ENCODE measurements at regions of chr1 and their contacts with region 1.

Region 1: GRCh38 chr1:21255278-21255942 is 34.9 kb downstream of the ECE1 start:
- DNase-seq: peak; percentile 87 to 93 (median 90)
- ATAC-seq: peak; percentile 73 to 90 (median 84)
- H3K4me3 ChIP-seq: no peak overlapping the region
- H3K27ac ChIP-seq: peak overlapping the region in 8 of 12 donors; percentile 31 to 59 (median 43)
- H3K4me1 ChIP-seq: peaks cover 0 to 39% (median 21%) of the 10 kb centered on the region in 12 donors
- H3K27me3 ChIP-seq: no peaks in the 10 kb centered on the region
- CTCF ChIP-seq: peak; percentile 79 to 93 (median 88)
- POLR2A ChIP-seq: no peak

Region 2: GRCh38 chr1:21232044-21232443 is 23.4 kb before region 1 on chr1:
- intact Hi-C with region 1: loop called in 1 of 10 experiments (anchors 2 kb)
- DNase-seq: peak in 2 of 5 donors; percentile 45 to 56
- ATAC-seq: peak; percentile 19 to 75 (median 70)
- H3K4me3 ChIP-seq: no peak overlapping the region
- H3K27ac ChIP-seq: no peak overlapping the region
- H3K4me1 ChIP-seq: peaks cover 0 to 16% (median 1%) of the 10 kb centered on the region in 12 donors
- H3K27me3 ChIP-seq: no peaks in the 10 kb centered on the region
- CTCF ChIP-seq: peak; percentile 72 to 92 (median 82)
- POLR2A ChIP-seq: no peak

Region 3: GRCh38 chr1:21344750-21345443 is 89.5 kb after region 1 on chr1:
- intact Hi-C with region 1: loop called in 4 of 10 experiments (anchors 5 kb)
- DNase-seq: peak in 3 of 5 donors; percentile 31 to 70 (median 48)
- ATAC-seq: peak in 3 of 4 donors; percentile 3 to 47 (median 42)
- H3K4me3 ChIP-seq: peak overlapping the region; percentile 46 to 96 (median 78)
- H3K27ac ChIP-seq: peak overlapping the region; percentile 64 to 92 (median 87)
- H3K4me1 ChIP-seq: peaks cover 0 to 59% (median 34%) of the 10 kb centered on the region in 12 donors
- H3K27me3 ChIP-seq: peaks cover 0 to 22% (median 0%) of the 10 kb centered on the region in 9 donors
- CTCF ChIP-seq: no peak
- POLR2A ChIP-seq: no peak

Region 4: DNA sequence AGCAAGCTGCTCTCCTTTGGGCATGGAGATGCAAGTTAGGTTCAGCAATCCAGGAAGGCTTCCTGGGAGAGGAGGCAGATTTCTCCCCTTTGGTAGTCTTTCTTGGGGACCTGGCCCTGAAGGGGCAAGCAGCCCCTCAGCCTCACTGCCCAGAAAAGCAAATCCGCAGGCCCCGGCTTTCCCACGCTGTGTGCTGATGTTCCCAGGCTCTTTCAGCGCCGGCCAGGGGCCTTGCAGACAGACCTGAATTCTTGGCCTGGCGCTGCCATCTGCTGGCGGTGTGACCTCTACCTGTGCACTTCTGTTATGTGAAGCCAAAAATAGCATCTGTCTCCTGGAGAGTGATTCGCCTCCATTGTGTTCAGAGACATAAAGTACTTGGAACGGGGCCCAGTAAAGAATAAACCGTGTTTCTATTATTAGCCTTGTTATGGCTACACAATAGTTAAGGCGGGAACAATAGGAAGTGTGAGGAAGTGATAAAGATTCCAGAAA is 318.6 kb after region 1 on chr1:
- intact Hi-C with region 1: loop called in 1 of 10 experiments (anchors 10 kb)
- DNase-seq: peak; percentile 85 to 92 (median 90)
- ATAC-seq: peak; percentile 89 to 94 (median 92)
- H3K4me3 ChIP-seq: peak overlapping the region in 2 of 12 donors; percentile 3 to 11
- H3K27ac ChIP-seq: peak overlapping the region; percentile 68 to 96 (median 82)
- H3K4me1 ChIP-seq: peaks cover 0 to 27% (median 21%) of the 10 kb centered on the region in 12 donors
- H3K27me3 ChIP-seq: peaks cover 0 to 4% (median 0%) of the 10 kb centered on the region in 9 donors
- CTCF ChIP-seq: peak; percentile 46 to 81 (median 66)
- POLR2A ChIP-seq: no peak

Region 5: DNA sequence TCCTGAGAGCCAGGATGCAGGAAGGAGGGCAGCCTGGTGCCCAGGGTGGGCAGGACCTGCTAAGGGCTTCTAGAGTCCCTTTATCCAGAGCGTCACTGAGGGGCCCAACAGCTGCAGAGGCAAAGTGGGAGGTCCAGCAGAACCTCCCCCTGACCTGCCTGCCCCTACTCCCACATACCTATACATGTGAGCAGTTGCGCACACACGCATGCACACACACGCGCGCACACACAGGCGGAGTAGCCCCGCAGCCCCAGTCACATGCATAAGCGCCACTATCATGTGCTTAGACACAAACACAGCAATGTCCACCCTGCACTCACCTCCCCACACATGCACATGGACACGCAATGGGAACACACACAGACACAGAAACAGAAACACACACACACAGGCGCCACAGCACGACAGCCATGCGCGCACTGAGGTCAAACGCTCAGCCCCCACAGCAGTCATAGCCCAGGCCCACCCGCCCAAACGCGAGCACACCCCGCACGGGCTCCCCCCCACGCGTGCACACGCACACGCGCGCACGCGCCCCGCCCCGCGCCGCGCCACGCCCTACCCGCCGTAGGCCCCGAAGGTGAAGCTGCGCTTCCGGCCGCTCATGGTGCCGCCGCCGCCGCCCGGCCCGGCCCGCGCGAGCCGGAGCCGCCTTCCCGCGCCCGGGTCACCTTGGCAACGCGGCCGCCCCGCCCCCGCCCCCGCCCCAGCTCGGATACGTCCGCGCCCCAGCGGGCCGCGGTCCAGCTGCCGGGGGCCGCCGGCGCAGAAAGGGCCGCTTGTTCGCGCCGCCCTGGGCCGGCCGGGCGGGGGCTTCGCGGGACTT is 396.0 kb after region 1 on chr1:
- intact Hi-C with region 1: loop called in 2 of 10 experiments (anchors 5 to 10 kb)
- DNase-seq: peak in 2 of 5 donors; percentile 39 to 60
- ATAC-seq: peak in 2 of 4 donors; percentile 57
- H3K4me3 ChIP-seq: peak overlapping the region in 11 of 12 donors; percentile 16 to 58 (median 51)
- H3K27ac ChIP-seq: no peak overlapping the region
- H3K4me1 ChIP-seq: peaks cover 0 to 15% (median 7%) of the 10 kb centered on the region in 12 donors
- H3K27me3 ChIP-seq: peaks cover 0 to 22% (median 2%) of the 10 kb centered on the region in 9 donors
- CTCF ChIP-seq: no peak
- POLR2A ChIP-seq: no peak